Right ventricle myocardium superior (tissue), 1 donor: ENCODE measurements at regions of chr5 and their contacts with region 1.

Region 1: DNA sequence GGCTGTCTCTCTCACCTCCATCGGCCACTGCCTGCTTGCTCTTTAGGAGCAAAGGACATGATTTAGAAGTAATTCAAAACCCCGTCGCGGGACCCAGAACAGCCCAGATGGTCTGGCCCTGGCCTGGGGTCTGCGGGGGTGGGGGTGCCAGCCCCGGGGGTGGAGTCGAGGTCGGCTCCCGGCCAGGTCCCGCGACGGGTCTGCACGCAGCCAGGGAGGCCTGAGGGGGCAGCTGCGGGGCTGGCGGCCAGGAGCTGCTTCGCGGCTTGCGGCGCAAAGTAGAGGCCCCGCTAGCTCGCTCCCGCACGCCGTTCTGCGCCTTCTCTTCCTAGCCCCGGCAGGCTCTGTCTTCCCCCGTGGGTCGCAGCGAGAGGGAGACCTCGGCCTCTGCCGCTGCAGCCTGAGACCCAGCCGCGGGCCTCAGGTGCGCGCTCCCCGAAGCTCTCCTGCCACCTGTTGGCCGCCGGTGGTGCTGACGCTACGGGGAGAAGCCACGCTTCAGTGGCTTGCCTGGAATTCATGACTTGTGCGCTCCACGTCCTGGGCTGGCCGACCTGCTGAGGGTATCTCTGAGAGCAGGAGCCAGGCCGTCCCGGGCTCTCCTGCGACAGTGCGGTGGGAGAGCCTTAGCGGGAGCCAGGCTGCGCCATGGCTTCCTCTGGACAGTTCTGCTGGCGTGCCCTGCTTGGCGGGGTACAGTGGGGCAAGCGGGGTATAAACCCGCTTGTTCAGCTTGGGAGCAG is 157.2 kb upstream of the PITX1 start:
- DNase-seq: peak; percentile 81
- ATAC-seq: peak; percentile 96

Region 2: GRCh38 chr5:134917070-134917815 is 274.0 kb before region 1 on chr5:
- intact Hi-C with region 1: loop called (anchors 10 kb)
- DNase-seq: no peak
- ATAC-seq: no peak

Region 3: GRCh38 chr5:135053278-135053677 is 138.0 kb before region 1 on chr5:
- intact Hi-C with region 1: loop called (anchors 10 kb)
- DNase-seq: no peak
- ATAC-seq: no peak

Region 4: GRCh38 chr5:135154197-135154596 is 37.1 kb before region 1 on chr5:
- intact Hi-C with region 1: no loop called
- DNase-seq: no peak
- ATAC-seq: no peak

Region 5: DNA sequence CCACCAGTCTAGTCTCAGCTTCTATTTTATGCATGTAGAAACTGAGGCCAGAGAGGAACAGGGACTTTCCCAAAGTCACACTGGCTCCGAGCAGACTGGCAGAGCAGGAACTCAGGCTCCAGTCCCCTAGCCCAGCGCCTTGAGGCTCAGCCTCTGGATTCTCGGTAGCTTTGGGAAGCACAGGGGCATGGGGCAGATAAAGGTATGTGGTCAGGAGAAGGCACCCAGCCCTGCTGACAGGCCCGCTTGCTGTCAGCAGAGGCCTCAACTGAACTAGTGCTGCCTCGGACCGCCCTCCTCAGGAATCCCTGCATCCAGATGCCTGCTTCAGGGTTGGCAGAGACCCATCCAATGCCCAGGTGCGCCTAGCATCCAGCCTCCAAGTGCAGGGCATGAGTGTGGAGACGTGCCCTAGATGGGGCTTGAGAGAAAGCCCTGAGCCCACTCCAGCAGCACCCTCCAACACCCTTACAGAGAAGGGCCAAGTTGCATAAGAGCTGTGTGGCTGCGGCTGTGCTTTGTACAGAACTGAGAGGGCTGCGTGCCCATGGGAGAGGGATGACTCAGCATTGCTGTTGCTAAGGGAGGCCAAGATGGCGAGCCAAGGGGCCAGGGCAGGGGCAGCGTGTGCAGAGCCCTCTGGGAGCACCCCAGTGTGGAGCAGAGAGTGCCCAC is 39.1 kb after region 1 on chr5:
- intact Hi-C with region 1: no loop called
- DNase-seq: peak; percentile 81
- ATAC-seq: peak; percentile 82